ENCODE measurements at regions of chr12 and their contacts with region 1.

Region 1: DNA sequence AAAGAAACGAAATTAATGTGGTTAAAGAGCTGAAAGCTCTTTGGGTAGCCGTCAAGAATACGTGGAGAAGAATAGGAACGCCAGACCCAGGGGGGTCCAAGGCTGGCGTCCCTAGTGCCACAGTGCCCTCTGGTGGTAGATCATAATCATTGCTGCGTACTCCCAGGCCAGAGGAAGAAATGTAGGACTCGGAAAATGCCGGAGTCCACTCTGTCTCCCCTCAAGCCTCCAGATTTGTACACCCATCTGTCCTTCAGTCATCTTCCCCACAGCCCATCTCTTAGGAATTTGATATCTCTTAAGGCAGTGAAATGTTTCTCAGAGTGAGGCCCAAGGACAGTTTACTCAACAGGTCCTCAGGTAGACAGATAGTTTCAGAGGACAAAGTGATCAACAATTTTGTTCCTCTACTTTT is 25.4 kb upstream of the PLEKHG6 start:
- DNase-seq: peak; percentile 84
- CTCF ChIP-seq: peak; percentile 80

Region 2: DNA sequence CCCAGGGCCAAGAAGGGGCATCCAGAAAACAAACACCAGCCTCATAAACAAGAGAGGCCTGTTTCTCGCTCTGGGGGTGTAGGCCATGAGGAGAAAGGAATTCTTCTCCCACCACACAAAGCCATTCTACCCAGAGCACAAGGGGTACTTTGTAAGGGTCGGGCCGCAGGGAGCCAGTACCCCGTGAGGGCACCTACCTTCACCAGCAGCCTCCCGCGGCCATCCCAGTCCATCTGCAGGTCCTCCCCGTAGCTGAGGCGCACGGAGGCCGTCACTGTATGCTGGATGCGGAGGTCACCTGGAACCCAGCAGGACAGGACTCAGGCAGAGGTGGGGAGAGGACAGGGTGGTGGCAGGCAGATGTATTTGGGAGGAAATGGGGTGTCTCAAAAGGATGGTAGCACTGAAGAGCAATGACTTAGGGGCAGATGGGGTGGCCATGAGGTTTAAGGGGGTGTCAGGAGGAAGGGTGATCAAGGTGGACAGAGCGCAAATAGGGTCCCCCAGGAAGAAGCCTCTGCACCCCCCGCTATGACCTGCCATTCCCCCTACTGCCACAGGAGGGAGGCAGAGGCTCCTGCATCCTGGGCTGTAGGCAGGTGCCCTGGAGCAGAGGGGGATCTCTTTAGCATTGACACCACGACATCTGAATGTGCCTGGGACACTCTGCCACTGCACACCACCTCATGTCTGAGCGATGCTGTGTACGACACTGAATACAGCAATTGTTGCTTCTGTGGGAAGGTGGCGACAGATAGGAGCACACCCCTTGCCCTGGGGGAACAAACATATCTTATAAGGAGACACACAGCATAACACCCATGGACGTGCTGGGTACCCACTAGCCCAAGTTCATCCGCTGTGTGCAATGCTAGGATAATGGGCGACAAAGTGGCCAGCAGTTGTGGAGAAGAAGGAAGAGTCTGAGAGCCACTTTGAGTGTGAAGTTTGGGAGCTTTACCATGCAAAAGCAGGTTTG is 222.0 kb before region 1 on chr12:
- CTCF ChIA-PET with region 1: interaction called, 34 read pairs
- POLR2A ChIA-PET with region 1: no interaction called
- DNase-seq: peak; percentile 82
- CTCF ChIP-seq: peak; percentile 88

Region 3: GRCh38 chr12:6272300-6273204 is 12.5 kb before region 1 on chr12:
- CTCF ChIA-PET with region 1: interaction called, 28 read pairs
- POLR2A ChIA-PET with region 1: no interaction called
- DNase-seq: peak; percentile 61
- CTCF ChIP-seq: no peak

Region 4: GRCh38 chr12:6295094-6295811 is 10.2 kb after region 1 on chr12:
- CTCF ChIA-PET with region 1: interaction called, 17 read pairs
- POLR2A ChIA-PET with region 1: no interaction called
- DNase-seq: no peak
- CTCF ChIP-seq: no peak

Region 5: DNA sequence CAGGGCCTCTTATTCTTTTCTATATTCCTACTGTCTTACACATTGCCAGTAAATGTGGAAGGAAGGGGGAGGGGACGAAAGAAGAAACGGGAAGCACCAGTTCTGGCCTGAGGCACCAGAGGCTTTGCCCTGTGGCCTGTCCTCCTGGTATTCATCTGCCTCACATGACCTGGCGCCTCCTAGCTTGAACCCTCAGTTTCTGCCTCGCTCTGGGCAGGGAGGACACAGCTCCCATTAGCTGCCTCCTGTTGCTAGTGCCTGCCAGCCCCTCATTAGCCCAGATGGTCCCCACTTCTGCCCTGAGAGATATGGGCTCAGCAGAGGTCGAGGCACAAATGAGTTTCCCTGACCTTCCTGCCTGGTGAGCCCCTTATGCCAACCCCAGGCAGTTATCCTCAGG is 22.5 kb after region 1 on chr12:
- CTCF ChIA-PET with region 1: interaction called, 12 read pairs
- POLR2A ChIA-PET with region 1: no interaction called
- DNase-seq: no peak
- CTCF ChIP-seq: no peak